ENCODE measurements at regions of chr6 and their contacts with region 1.

Region 1: GRCh38 chr6:3848925-3849605 is at the start of gene FAM50B:
- DNase-seq: peak; percentile 96
- H3K4me3 Mint-ChIP-seq: peak within 1 kb of the TSS; percentile 71
- H3K27ac Mint-ChIP-seq: peak within 1 kb of the TSS; percentile 91
- H3K4me1 Mint-ChIP-seq: peaks cover 40% of the 10 kb centered on the region
- H3K27me3 Mint-ChIP-seq: no peaks in the 10 kb centered on the region
- total RNA-seq, gene FAM50B: 16.9 to 18.8 TPM

Region 2: GRCh38 chr6:3068329-3069214 is 780.5 kb before region 1 on chr6 and contains the start of gene RIPK1:
- CTCF ChIA-PET with region 1: no interaction called
- POLR2A ChIA-PET with region 1: interaction called, 4 read pairs
- intact Hi-C with region 1: loop called (anchors 5 kb)
- DNase-seq: peak; percentile 96
- H3K4me3 Mint-ChIP-seq: peak within 1 kb of the TSS; percentile 96
- H3K27ac Mint-ChIP-seq: peak within 1 kb of the TSS; percentile 98
- H3K4me1 Mint-ChIP-seq: peaks cover 62% of the 10 kb centered on the region
- H3K27me3 Mint-ChIP-seq: no peaks in the 10 kb centered on the region
- total RNA-seq, gene RIPK1: 18.5 to 18.6 TPM

Region 3: GRCh38 chr6:3557336-3557735 is 291.7 kb before region 1 on chr6:
- CTCF ChIA-PET with region 1: no interaction called
- POLR2A ChIA-PET with region 1: no interaction called
- intact Hi-C with region 1: no loop called
- DNase-seq: no peak
- H3K4me3 Mint-ChIP-seq: no peak overlapping the region
- H3K27ac Mint-ChIP-seq: no peak overlapping the region
- H3K4me1 Mint-ChIP-seq: no peaks in the 10 kb centered on the region
- H3K27me3 Mint-ChIP-seq: peaks cover 14% of the 10 kb centered on the region

Region 4: GRCh38 chr6:3748208-3749066 is 100.6 kb before region 1 on chr6:
- CTCF ChIA-PET with region 1: interaction called, 20 read pairs
- POLR2A ChIA-PET with region 1: interaction called, 3 read pairs
- intact Hi-C with region 1: loop called (anchors 2 kb)
- DNase-seq: peak; percentile 69
- H3K4me3 Mint-ChIP-seq: no peak overlapping the region
- H3K27ac Mint-ChIP-seq: no peak overlapping the region
- H3K4me1 Mint-ChIP-seq: peaks cover 6% of the 10 kb centered on the region
- H3K27me3 Mint-ChIP-seq: peaks cover 29% of the 10 kb centered on the region

Region 5: GRCh38 chr6:3808759-3809514 is 40.1 kb before region 1 on chr6:
- CTCF ChIA-PET with region 1: no interaction called
- POLR2A ChIA-PET with region 1: no interaction called
- intact Hi-C with region 1: no loop called
- DNase-seq: no peak
- H3K4me3 Mint-ChIP-seq: no peak overlapping the region
- H3K27ac Mint-ChIP-seq: no peak overlapping the region
- H3K4me1 Mint-ChIP-seq: no peaks in the 10 kb centered on the region
- H3K27me3 Mint-ChIP-seq: no peaks in the 10 kb centered on the region

Region 6: DNA sequence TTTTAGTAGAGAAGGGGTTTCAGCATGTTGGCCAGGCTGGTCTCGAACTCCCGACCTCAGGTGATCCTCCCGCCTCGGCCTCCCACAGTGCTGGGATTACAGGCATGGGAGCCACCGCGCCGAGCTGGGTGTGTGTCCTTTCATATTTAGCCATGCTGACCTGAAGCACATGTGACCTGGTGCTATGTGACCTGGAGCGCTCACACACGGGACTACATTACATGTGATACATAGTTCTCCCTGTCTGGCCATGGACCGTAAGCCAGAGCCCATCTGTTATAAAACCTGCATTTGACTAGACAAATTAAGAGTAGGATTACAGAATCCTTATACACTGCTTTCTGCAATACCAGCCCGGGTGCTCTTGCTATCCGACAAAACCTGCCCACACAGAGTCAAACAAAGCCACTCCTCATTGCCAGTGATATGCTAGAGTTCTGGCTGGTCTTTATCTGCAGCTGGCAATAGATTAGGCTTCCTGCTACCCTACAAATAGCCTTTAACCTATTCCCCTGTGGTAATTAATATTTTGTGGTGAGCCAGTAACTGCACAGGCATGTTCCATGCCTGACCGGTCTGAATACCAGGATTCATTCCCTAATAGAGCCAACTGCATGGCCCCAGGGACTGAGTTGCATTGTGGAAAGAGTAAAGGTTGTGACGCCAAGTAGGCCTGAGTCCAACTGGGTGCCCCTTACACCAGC is 26.2 kb before region 1 on chr6:
- CTCF ChIA-PET with region 1: no interaction called
- POLR2A ChIA-PET with region 1: no interaction called
- intact Hi-C with region 1: no loop called
- DNase-seq: no peak
- H3K4me3 Mint-ChIP-seq: no peak overlapping the region
- H3K27ac Mint-ChIP-seq: no peak overlapping the region
- H3K4me1 Mint-ChIP-seq: no peaks in the 10 kb centered on the region
- H3K27me3 Mint-ChIP-seq: no peaks in the 10 kb centered on the region

Region 7: DNA sequence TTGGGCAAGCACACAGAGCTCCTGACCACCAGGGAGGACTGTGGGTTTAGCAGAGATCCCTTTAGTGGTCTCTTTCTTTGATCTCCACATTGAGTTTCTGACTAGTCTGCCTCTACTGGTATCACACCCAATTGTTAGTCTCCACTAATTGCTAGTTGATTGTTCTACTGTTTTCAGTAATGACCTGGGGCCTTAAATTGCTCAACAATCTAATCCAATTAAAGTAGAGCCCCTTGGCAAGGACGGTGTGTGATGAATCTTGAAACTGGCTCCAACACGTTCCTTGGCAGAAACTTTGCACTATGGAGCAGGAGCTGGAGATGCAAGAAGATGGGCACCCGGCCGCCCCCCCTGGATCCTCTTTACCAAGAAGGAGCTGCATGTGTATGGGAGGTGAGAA is 12.4 kb after region 1 on chr6:
- CTCF ChIA-PET with region 1: interaction called, 75 read pairs
- POLR2A ChIA-PET with region 1: interaction called, 64 read pairs
- intact Hi-C with region 1: no loop called
- DNase-seq: no peak
- H3K4me3 Mint-ChIP-seq: no peak overlapping the region
- H3K27ac Mint-ChIP-seq: no peak overlapping the region
- H3K4me1 Mint-ChIP-seq: peaks cover under 1% of the 10 kb centered on the region
- H3K27me3 Mint-ChIP-seq: peaks cover 13% of the 10 kb centered on the region

Region 8: GRCh38 chr6:3887150-3887700 is 38.2 kb after region 1 on chr6:
- CTCF ChIA-PET with region 1: interaction called, 36 read pairs
- POLR2A ChIA-PET with region 1: no interaction called
- intact Hi-C with region 1: no loop called
- DNase-seq: peak; percentile 20
- H3K4me3 Mint-ChIP-seq: no peak overlapping the region
- H3K27ac Mint-ChIP-seq: no peak overlapping the region
- H3K4me1 Mint-ChIP-seq: no peaks in the 10 kb centered on the region
- H3K27me3 Mint-ChIP-seq: peaks cover 1% of the 10 kb centered on the region

Region 9: DNA sequence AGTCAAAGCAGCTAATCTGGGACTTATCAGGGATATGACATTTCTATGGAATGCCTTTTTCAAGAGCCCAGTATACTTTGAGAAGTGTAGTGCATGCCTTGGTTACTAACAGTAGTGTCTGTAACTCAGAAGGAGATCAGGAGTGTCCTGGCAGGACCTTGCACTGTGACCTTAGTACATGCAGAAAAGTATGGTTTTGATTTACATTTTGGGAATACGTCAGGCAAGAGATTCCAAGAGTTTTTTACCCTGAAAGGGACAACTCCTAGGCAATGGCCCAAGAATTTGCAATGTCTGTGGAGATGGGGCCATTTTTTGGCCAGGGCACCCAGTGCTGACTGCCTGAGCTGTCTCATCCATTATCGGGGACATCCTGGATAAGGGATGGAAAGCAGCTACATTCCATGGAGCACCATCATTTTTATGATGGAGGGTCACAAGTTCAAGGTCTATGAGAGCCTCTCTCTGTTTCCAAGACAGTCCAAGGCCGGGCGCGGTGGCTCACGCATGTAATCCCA is 80.3 kb after region 1 on chr6:
- CTCF ChIA-PET with region 1: interaction called, 46 read pairs
- POLR2A ChIA-PET with region 1: no interaction called
- intact Hi-C with region 1: loop called (anchors 1 kb)
- DNase-seq: no peak
- H3K4me3 Mint-ChIP-seq: no peak overlapping the region
- H3K27ac Mint-ChIP-seq: no peak overlapping the region
- H3K4me1 Mint-ChIP-seq: no peaks in the 10 kb centered on the region
- H3K27me3 Mint-ChIP-seq: no peaks in the 10 kb centered on the region

Region 10: GRCh38 chr6:4018172-4018905 is 169.3 kb after region 1 on chr6:
- CTCF ChIA-PET with region 1: interaction called, 9 read pairs
- POLR2A ChIA-PET with region 1: interaction called, 14 read pairs
- intact Hi-C with region 1: loop called (anchors 2 kb)
- DNase-seq: peak; percentile 98
- H3K4me3 Mint-ChIP-seq: peak overlapping the region; percentile 90
- H3K27ac Mint-ChIP-seq: peak overlapping the region; percentile 97
- H3K4me1 Mint-ChIP-seq: peaks cover 63% of the 10 kb centered on the region
- H3K27me3 Mint-ChIP-seq: no peaks in the 10 kb centered on the region

Measured in activated CD4-positive, alpha-beta memory T cell treated with anti-CD3 and anti-CD28 coated beads for 36 hours (primary cell).